ENCODE measurements at regions of chr18 and their contacts with region 1.

Region 1: GRCh38 chr18:3771121-3771971 is 321.4 kb downstream of the TGIF1 start:
- DNase-seq: peak; percentile 90
- ATAC-seq: peak; percentile 93
- H3K4me3 Mint-ChIP-seq: peak overlapping the region; percentile 87
- H3K27ac Mint-ChIP-seq: no peak overlapping the region; the same call in 1 of the 2 replicates
- H3K4me1 Mint-ChIP-seq: peaks cover 48% of the 10 kb centered on the region
- H3K27me3 Mint-ChIP-seq: no peaks in the 10 kb centered on the region; the same call in 1 of the 2 replicates
- CTCF ChIP-seq: peak; percentile 96

Region 2: DNA sequence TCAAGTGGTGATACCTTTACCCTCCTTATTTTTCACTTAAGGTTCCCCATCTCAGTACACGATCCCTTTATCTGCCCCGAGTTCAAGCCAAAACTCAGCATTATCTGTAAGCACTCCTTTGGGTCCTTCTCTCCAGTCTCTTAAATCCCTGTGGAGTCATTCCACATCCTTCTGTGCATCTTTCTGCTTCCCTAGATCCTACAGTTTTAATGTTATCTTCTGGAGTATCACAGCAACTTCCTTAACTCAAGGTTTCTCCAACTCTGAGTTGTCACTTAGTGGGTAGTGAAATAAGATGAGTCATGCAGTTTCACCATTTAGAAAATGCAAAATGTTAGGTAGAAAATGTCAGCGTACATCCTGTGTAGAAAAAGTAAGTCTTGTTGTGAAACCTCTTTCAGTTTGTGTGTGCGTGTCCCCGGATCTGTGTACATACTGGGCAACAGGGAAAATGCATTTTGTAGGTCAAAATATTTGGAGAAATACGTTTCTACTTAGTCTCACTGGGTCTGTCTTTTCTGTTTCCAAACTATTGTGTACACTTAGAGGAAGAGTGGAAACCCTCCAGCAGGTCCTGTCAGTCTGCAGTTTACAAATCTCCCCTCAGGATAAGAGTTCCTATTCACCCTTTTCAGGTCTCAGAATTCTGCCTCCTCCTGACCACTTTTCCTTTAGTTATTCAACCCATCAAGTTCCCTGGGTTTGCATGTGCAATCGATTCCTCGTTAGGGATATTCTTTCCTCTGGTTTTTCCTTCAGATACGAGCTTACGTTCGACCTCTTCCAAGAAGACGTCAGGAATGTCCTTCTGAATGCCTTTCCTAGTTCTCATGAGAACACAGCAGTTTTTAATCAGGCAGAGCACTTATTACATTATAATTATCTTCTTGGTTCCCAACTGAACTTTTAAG is 166.6 kb before region 1 on chr18:
- CTCF ChIA-PET with region 1: interaction called, 14 read pairs
- POLR2A ChIA-PET with region 1: no interaction called
- DNase-seq: no peak
- ATAC-seq: no peak
- H3K4me3 Mint-ChIP-seq: no peak overlapping the region
- H3K27ac Mint-ChIP-seq: no peak overlapping the region
- H3K4me1 Mint-ChIP-seq: peaks cover 24% of the 10 kb centered on the region
- H3K27me3 Mint-ChIP-seq: no peaks in the 10 kb centered on the region
- CTCF ChIP-seq: no peak

Region 3: DNA sequence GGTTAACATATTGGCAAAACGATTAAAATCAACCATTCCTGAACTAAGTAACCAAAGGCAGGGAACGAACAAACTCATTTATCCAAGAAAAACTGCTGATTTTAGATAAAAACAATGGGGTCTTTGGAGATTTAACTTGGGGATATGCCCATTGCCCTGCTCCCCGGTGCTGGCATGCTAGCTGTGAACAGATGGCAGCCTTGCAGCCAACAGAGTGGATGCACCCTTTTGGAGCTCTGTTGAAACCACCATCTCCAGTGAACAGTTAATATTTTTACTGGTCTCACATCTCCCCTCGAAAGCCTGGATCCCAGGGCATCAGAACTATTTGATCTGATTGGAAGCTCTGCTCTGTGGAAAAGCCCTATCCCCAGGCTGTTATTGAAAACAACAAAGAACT is 18.2 kb before region 1 on chr18:
- CTCF ChIA-PET with region 1: interaction called, 42 read pairs
- POLR2A ChIA-PET with region 1: no interaction called
- DNase-seq: no peak
- ATAC-seq: no peak
- H3K4me3 Mint-ChIP-seq: no peak overlapping the region
- H3K27ac Mint-ChIP-seq: no peak overlapping the region
- H3K4me1 Mint-ChIP-seq: peaks cover 9% of the 10 kb centered on the region
- H3K27me3 Mint-ChIP-seq: no peaks in the 10 kb centered on the region
- CTCF ChIP-seq: no peak

Region 4: GRCh38 chr18:3821524-3821923 is 50.2 kb after region 1 on chr18:
- CTCF ChIA-PET with region 1: interaction called, 27 read pairs
- POLR2A ChIA-PET with region 1: no interaction called
- DNase-seq: no peak
- ATAC-seq: peak; percentile 69
- H3K4me3 Mint-ChIP-seq: no peak overlapping the region
- H3K27ac Mint-ChIP-seq: peak overlapping the region; percentile 59
- H3K4me1 Mint-ChIP-seq: peaks cover 25% of the 10 kb centered on the region
- H3K27me3 Mint-ChIP-seq: no peaks in the 10 kb centered on the region
- CTCF ChIP-seq: no peak

Region 5: GRCh38 chr18:3863593-3863992 is 92.2 kb after region 1 on chr18:
- CTCF ChIA-PET with region 1: interaction called, 123 read pairs
- POLR2A ChIA-PET with region 1: no interaction called
- DNase-seq: no peak
- ATAC-seq: peak; percentile 48; the same call in 1 of the 2 replicates
- H3K4me3 Mint-ChIP-seq: no peak overlapping the region
- H3K27ac Mint-ChIP-seq: no peak overlapping the region
- H3K4me1 Mint-ChIP-seq: peaks cover 14% of the 10 kb centered on the region
- H3K27me3 Mint-ChIP-seq: no peaks in the 10 kb centered on the region
- CTCF ChIP-seq: no peak

Region 6: DNA sequence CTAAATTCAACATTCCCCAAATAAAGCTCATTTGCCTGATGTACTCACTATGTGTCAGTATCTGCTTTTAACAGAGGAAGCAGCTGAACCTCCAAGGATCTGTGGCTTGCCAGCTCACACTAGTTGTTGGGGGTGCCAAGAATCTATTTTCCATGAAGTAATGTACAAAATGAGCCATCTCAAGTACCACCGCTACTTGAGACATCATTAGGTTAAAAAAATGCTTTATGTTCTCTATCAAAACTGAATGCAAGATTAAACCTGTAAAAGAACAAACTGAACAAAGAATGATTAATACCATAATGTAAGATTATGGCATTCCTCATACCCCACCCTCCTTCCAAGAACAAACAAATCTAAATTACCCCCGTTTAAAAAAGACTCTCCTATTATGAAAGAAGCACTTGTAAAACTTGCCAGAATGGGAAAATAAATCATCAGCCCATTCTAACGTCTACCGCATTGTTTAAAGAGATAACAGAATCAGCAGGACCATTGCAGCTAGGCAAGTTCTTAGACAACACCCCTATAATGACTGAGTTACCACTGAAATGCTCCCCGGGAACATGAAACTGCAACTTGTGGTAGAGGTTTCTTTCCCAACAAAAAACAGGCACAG is 212.1 kb after region 1 on chr18:
- CTCF ChIA-PET with region 1: interaction called, 23 read pairs
- POLR2A ChIA-PET with region 1: no interaction called
- DNase-seq: no peak
- ATAC-seq: no peak
- H3K4me3 Mint-ChIP-seq: no peak overlapping the region
- H3K27ac Mint-ChIP-seq: no peak overlapping the region
- H3K4me1 Mint-ChIP-seq: peaks cover 15% of the 10 kb centered on the region
- H3K27me3 Mint-ChIP-seq: no peaks in the 10 kb centered on the region
- CTCF ChIP-seq: no peak